ENCODE measurements at regions of chr1 and their contacts with region 1.

Region 1: DNA sequence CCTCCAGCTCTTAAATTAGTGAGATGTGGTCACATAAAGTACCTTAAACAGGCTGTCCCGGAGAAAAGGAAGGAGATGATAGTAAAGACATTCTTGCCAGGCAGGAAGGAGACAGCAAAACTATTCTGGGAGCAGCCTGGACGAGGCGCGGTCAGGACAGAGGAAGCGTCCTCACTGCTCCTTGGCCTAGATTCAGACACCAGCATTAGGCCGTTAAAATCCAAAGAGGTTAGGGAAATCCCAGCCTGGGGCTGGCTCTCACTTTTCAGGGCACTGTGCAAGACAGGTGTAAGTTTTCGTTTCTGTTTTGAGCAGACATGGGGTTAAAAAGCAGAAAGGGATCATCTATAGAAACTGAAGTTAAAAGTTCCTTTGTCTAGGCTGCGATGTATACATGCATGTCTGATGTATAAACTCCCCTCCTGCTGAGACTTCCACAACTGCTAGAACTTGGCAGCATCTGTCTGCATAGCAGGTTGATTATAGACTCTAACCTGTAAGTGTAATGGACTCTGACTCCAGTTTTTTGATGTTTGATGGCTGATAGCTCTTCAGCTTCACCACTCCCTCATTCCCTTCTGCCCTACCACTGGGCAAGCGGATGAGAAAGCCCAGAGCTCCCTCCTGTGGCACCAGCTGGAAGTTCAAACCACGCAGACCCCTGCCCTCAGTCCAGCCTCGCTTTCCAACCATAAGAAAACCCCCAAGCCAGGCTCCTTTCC is 21.5 kb downstream of the STPG1 start:
- DNase-seq: peak; percentile 84
- ATAC-seq: peak; percentile 89
- H3K4me3 ChIP-seq: peak overlapping the region; percentile 58; the same call in 1 of the 2 replicates
- H3K27ac ChIP-seq: peak overlapping the region; percentile 85
- H3K4me1 ChIP-seq: peaks cover 18% of the 10 kb centered on the region
- H3K27me3 ChIP-seq: no peaks in the 10 kb centered on the region; a peak in 1 of 4 replicates
- CTCF ChIP-seq: peak; percentile 78 to 82 (median 78)
- EP300 ChIP-seq: no peak
- POLR2A ChIP-seq: no peak; the same call in none of the 2 replicates
- RAD21 ChIP-seq: peak; percentile 85

Region 2: DNA sequence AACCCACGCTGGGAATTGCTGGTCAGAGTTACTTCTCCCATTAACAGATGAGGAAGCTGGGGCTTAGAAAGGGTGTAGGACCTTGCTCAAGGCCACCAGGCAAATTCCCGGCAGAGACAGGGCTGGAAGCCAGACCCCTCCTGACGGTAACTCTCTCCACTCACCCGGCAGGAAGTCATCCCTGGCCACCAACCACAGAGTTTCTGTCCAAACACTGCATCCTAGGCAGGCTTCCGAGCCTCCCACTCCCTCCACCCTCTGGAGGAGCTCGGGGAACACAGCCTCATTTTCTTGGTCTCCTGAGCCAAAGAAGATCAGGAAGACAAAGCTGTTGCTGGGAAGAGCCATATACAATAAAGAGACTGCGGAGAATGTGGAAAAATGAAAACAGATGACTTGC is 997.4 kb before region 1 on chr1:
- CTCF ChIA-PET with region 1: no interaction called
- POLR2A ChIA-PET with region 1: no interaction called
- RAD21 ChIA-PET with region 1: no interaction called
- SMC1A ChIA-PET with region 1: no interaction called
- in situ Hi-C with region 1: no loop called
- intact Hi-C with region 1: no loop called
- DNase-seq: no peak
- ATAC-seq: no peak
- H3K4me3 ChIP-seq: no peak overlapping the region
- H3K27ac ChIP-seq: no peak overlapping the region
- H3K4me1 ChIP-seq: no peaks in the 10 kb centered on the region
- H3K27me3 ChIP-seq: peaks cover 0 to 2% of the 10 kb centered on the region in 2 experiments; a peak in 1 of 4 replicates
- CTCF ChIP-seq: no peak
- EP300 ChIP-seq: no peak
- POLR2A ChIP-seq: no peak
- RAD21 ChIP-seq: no peak

Region 3: GRCh38 chr1:23816906-23817305 is 575.1 kb before region 1 on chr1:
- CTCF ChIA-PET with region 1: no interaction called
- POLR2A ChIA-PET with region 1: no interaction called
- RAD21 ChIA-PET with region 1: no interaction called
- SMC1A ChIA-PET with region 1: no interaction called
- in situ Hi-C with region 1: no loop called
- intact Hi-C with region 1: no loop called
- DNase-seq: no peak
- ATAC-seq: peak; percentile 61
- H3K4me3 ChIP-seq: no peak overlapping the region
- H3K27ac ChIP-seq: no peak overlapping the region; the same call in 1 of the 2 replicates
- H3K4me1 ChIP-seq: peaks cover 13% of the 10 kb centered on the region
- H3K27me3 ChIP-seq: no peaks in the 10 kb centered on the region
- CTCF ChIP-seq: no peak
- EP300 ChIP-seq: no peak
- POLR2A ChIP-seq: no peak
- RAD21 ChIP-seq: no peak

Region 4: DNA sequence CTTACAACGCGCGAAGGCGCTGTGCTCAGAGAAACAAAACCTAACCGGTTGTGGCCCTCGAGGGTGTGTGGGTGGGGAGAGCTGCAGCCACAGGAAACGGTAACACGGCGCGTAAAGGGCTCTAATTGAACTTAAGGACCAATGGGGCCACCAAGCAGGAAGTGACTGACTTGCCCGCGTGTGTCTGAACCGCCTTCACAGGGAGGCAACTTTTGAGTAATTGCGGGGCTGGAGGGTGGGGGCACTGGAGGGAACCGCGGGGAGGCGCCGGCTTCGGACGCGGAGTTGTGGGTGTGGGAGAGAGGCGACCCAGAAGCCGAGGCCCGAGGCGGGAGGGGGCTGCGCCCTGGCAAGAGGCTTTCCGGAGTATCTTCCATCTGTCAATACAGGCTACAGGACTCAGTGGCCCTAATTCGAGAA is 433.0 kb before region 1 on chr1:
- CTCF ChIA-PET with region 1: interaction called, 4 read pairs
- POLR2A ChIA-PET with region 1: no interaction called
- RAD21 ChIA-PET with region 1: no interaction called
- SMC1A ChIA-PET with region 1: no interaction called
- in situ Hi-C with region 1: no loop called
- intact Hi-C with region 1: loop called (anchors 5 kb)
- DNase-seq: peak; percentile 96
- ATAC-seq: peak; percentile 87
- H3K4me3 ChIP-seq: peak overlapping the region; percentile 87
- H3K27ac ChIP-seq: peak overlapping the region; percentile 97
- H3K4me1 ChIP-seq: peaks cover 31% of the 10 kb centered on the region
- H3K27me3 ChIP-seq: no peaks in the 10 kb centered on the region
- CTCF ChIP-seq: peak in 2 of 3 experiments; percentile 19 to 67; a peak in 3 of 6 replicates
- EP300 ChIP-seq: peak in 1 of 2 experiments; percentile 50; a peak in 1 of 4 replicates
- POLR2A ChIP-seq: peak; percentile 68
- RAD21 ChIP-seq: peak; percentile 41

Region 5: GRCh38 chr1:24186993-24187805 is 204.8 kb before region 1 on chr1 and contains the start of gene IFNLR1:
- CTCF ChIA-PET with region 1: interaction called, 72 read pairs
- POLR2A ChIA-PET with region 1: interaction called, 11 read pairs
- RAD21 ChIA-PET with region 1: interaction called, 35 read pairs
- SMC1A ChIA-PET with region 1: interaction called, 45 read pairs
- in situ Hi-C with region 1: no loop called
- intact Hi-C with region 1: no loop called
- DNase-seq: no peak
- ATAC-seq: peak; percentile 52
- H3K4me3 ChIP-seq: peak within 1 kb of the TSS; percentile 71; the same call in 1 of the 2 replicates
- H3K27ac ChIP-seq: peak within 1 kb of the TSS; percentile 5; the same call in 1 of the 2 replicates
- H3K4me1 ChIP-seq: peaks cover 47% of the 10 kb centered on the region
- H3K27me3 ChIP-seq: peaks cover 0 to 4% of the 10 kb centered on the region in 2 experiments; a peak in 2 of 4 replicates
- CTCF ChIP-seq: no peak
- EP300 ChIP-seq: no peak
- POLR2A ChIP-seq: peak; percentile 68
- RAD21 ChIP-seq: no peak
- polyA plus RNA-seq, gene IFNLR1: 0.31 to 0.88 TPM

Region 6: DNA sequence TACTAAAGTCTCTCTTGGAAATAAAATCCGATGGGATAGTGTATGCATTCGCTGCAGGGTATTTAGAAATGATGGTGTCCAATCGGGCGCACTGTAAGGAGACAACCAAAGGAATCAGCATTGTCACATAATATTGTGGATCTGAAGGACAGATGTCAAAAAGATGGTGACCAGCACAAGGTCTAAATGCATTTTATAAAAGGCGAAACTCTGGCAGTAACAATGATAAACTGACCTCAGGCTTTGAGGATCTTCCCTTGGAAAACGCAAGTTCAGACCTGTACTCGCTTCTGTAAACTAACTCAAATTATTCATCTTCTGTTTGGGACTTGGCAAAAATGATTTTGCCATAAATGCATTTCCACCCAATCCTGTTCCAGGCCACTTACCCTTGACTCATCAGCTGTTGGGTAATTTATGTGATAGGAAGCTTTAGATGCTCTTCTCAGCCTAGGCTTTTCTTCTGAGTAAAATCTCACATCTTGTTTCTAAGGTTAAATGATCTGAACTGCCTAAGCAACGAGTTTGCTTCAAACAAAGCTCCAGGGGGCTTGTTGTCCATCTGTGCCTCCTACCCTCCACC is 12.2 kb before region 1 on chr1:
- CTCF ChIA-PET with region 1: interaction called, 12 read pairs
- POLR2A ChIA-PET with region 1: no interaction called
- RAD21 ChIA-PET with region 1: interaction called, 12 read pairs
- SMC1A ChIA-PET with region 1: interaction called, 16 read pairs
- in situ Hi-C with region 1: no loop called
- intact Hi-C with region 1: no loop called
- DNase-seq: no peak
- ATAC-seq: no peak
- H3K4me3 ChIP-seq: no peak overlapping the region
- H3K27ac ChIP-seq: no peak overlapping the region
- H3K4me1 ChIP-seq: peaks cover 11% of the 10 kb centered on the region
- H3K27me3 ChIP-seq: no peaks in the 10 kb centered on the region
- CTCF ChIP-seq: no peak
- EP300 ChIP-seq: no peak
- POLR2A ChIP-seq: no peak
- RAD21 ChIP-seq: no peak

Region 7: GRCh38 chr1:24424207-24424606 is 32.2 kb after region 1 on chr1:
- CTCF ChIA-PET with region 1: interaction called, 15 read pairs
- POLR2A ChIA-PET with region 1: no interaction called
- RAD21 ChIA-PET with region 1: no interaction called
- SMC1A ChIA-PET with region 1: no interaction called
- in situ Hi-C with region 1: no loop called
- intact Hi-C with region 1: no loop called
- DNase-seq: no peak
- ATAC-seq: no peak
- H3K4me3 ChIP-seq: no peak overlapping the region
- H3K27ac ChIP-seq: no peak overlapping the region
- H3K4me1 ChIP-seq: no peaks in the 10 kb centered on the region
- H3K27me3 ChIP-seq: no peaks in the 10 kb centered on the region
- CTCF ChIP-seq: no peak
- EP300 ChIP-seq: no peak
- POLR2A ChIP-seq: no peak
- RAD21 ChIP-seq: no peak

Region 8: GRCh38 chr1:24635195-24635843 is 243.3 kb after region 1 on chr1:
- CTCF ChIA-PET with region 1: interaction called, 10 read pairs
- POLR2A ChIA-PET with region 1: no interaction called
- RAD21 ChIA-PET with region 1: interaction called, 3 read pairs
- SMC1A ChIA-PET with region 1: interaction called, 6 read pairs
- in situ Hi-C with region 1: no loop called
- intact Hi-C with region 1: loop called (anchors 5 kb)
- DNase-seq: no peak
- ATAC-seq: peak; percentile 86
- H3K4me3 ChIP-seq: no peak overlapping the region
- H3K27ac ChIP-seq: no peak overlapping the region
- H3K4me1 ChIP-seq: no peaks in the 10 kb centered on the region
- H3K27me3 ChIP-seq: no peaks in the 10 kb centered on the region
- CTCF ChIP-seq: peak; percentile 44 to 70 (median 57); a peak in 4 of 6 replicates
- EP300 ChIP-seq: no peak
- POLR2A ChIP-seq: no peak
- RAD21 ChIP-seq: peak; percentile 68

Region 9: DNA sequence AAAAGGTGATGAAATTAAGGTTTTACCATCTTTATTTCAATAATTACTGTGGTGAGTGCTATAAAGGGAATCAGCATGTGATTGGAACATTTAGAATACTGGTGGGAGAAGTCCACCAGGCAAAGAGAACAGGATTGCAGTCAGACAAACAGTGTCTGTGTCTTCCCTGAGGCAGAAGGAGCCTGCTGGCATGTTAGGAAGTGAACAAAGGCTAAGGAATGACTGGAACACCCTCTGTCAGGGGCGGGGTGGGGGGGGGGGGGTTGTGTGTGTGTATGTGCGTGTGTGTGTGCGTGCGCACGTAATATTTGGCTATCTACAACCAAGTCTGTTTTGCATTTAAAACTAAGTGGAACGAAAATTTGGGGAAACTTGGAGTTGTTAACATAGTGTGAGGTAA is 281.3 kb after region 1 on chr1:
- CTCF ChIA-PET with region 1: no interaction called
- POLR2A ChIA-PET with region 1: no interaction called
- RAD21 ChIA-PET with region 1: no interaction called
- SMC1A ChIA-PET with region 1: no interaction called
- in situ Hi-C with region 1: no loop called
- intact Hi-C with region 1: no loop called
- DNase-seq: no peak
- ATAC-seq: no peak
- H3K4me3 ChIP-seq: no peak overlapping the region
- H3K27ac ChIP-seq: no peak overlapping the region
- H3K4me1 ChIP-seq: no peaks in the 10 kb centered on the region
- H3K27me3 ChIP-seq: no peaks in the 10 kb centered on the region
- CTCF ChIP-seq: no peak
- EP300 ChIP-seq: no peak
- POLR2A ChIP-seq: no peak
- RAD21 ChIP-seq: no peak